Activated naive CD4-positive, alpha-beta T cell treated with anti-CD3 and anti-CD28 coated beads, Interleukin-2, amount 10 ng/mL, durations not matched to agents 7 days and 5 days (primary cell): ENCODE measurements at regions of chr10 and their contacts with region 1.

Region 1: GRCh38 chr10:24617771-24618391 is 105.8 kb downstream of the ARHGAP21 start:
- DNase-seq: peak; percentile 54
- H3K4me3 Mint-ChIP-seq: no peak overlapping the region
- H3K27ac Mint-ChIP-seq: no peak overlapping the region
- H3K4me1 Mint-ChIP-seq: peaks cover 22% of the 10 kb centered on the region
- H3K27me3 Mint-ChIP-seq: no peaks in the 10 kb centered on the region

Region 2: DNA sequence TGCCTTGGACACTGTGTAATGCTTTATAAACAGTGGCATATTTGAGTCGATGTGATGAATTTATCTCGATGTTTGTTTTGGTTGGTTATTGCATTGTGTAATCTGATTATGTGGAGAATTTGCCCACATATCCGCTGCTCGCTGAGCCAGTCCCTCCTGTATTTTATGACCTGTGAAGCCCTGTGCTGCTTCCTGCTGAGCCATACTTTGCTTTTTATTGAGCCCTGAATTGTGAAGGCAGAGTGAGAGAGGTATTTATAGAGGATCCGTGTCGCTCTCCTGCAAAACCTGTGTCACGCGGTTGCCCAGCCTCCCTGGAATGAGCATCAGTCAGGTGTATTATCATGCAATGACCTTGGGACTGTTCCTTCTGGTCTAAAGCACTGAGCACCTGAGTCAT is 147.9 kb before region 1 on chr10:
- CTCF ChIA-PET with region 1: no interaction called
- DNase-seq: no peak
- H3K4me3 Mint-ChIP-seq: no peak overlapping the region
- H3K27ac Mint-ChIP-seq: no peak overlapping the region
- H3K4me1 Mint-ChIP-seq: peaks cover 11% of the 10 kb centered on the region
- H3K27me3 Mint-ChIP-seq: peaks cover 7% of the 10 kb centered on the region

Region 3: GRCh38 chr10:24603333-24603732 is 14.5 kb before region 1 on chr10:
- CTCF ChIA-PET with region 1: interaction called, 10 read pairs
- DNase-seq: no peak
- H3K4me3 Mint-ChIP-seq: no peak overlapping the region
- H3K27ac Mint-ChIP-seq: peak overlapping the region; percentile 12
- H3K4me1 Mint-ChIP-seq: peaks cover 12% of the 10 kb centered on the region
- H3K27me3 Mint-ChIP-seq: no peaks in the 10 kb centered on the region

Region 4: DNA sequence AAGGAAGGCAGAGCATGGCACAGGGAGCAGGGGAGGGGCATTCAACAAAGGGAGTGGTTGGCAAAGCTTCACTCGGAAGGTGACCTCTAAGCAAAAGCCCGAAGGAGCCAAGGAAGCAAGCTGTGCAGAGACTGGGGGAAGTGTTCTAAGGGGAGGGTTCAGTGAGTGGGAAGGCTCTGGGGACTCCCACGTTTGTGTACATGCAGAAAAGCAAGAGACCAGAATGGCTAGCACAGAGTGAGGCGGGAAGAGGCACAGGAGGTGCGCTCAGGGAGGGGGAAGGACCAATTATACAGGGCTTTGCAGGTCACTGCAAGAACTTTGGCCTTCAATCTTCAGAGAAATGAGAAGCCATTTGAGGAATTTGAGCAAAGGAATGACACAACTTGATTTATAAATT is 98.4 kb after region 1 on chr10:
- CTCF ChIA-PET with region 1: no interaction called
- DNase-seq: no peak
- H3K4me3 Mint-ChIP-seq: no peak overlapping the region
- H3K27ac Mint-ChIP-seq: no peak overlapping the region
- H3K4me1 Mint-ChIP-seq: peaks cover 18% of the 10 kb centered on the region
- H3K27me3 Mint-ChIP-seq: no peaks in the 10 kb centered on the region

Region 5: DNA sequence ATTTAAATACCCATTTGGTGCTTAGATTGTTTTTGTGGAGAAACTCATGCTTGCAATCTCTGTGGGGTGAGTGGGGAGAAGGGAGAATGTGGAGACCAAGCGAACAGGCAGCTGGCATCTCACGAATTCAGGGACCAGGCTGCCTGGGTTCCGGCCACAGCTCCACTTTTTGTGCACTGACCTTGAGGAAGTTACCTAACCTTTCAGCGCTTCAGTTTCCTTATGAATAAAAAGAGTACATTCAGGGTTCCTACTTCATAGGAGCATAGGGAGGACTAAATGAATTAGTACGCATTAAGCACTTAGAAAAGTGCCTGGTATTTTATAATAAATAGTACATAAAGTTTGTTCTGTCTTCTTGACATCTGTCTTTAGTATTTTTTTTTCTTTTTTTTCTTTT is 262.0 kb after region 1 on chr10:
- CTCF ChIA-PET with region 1: no interaction called
- DNase-seq: no peak
- H3K4me3 Mint-ChIP-seq: no peak overlapping the region
- H3K27ac Mint-ChIP-seq: no peak overlapping the region
- H3K4me1 Mint-ChIP-seq: peaks cover 31% of the 10 kb centered on the region
- H3K27me3 Mint-ChIP-seq: peaks cover 4% of the 10 kb centered on the region